ENCODE measurements at regions of chr5 and their contacts with region 1.

Region 1: DNA sequence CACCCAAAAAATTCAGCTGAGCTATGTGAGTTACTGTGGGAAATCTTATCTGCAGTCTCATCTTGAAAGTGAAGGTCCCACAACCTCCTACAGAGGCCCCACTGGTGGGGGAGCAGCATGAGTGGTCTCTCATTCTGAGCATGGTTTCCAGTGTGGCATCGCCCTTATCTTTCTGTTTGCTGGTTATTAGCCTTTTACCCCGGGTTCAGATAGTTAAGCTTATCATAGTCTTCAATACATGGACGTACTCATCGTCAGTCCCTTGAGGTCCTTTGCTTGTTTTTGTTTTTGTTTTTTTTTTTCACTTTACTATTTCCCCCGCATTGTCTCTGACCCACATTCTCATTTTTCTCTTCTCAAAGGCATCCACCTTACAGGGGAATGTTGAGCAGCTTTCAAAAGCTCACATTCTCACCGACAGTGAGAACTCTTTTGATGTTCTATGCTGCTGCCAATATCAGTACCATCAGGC is 7.7 kb upstream of the HAVCR2 start:
- DNase-seq: peak; percentile 63
- ATAC-seq: peak; percentile 88
- H3K4me3 ChIP-seq: peak overlapping the region; percentile 18; the same call in 1 of the 2 replicates
- H3K27ac ChIP-seq: peak overlapping the region; percentile 90
- H3K4me1 ChIP-seq: peaks cover 22% of the 10 kb centered on the region
- H3K27me3 ChIP-seq: no peaks in the 10 kb centered on the region
- CTCF ChIP-seq: no peak
- EP300 ChIP-seq: no peak
- POLR2A ChIP-seq: no peak
- RAD21 ChIP-seq: 0 out of 2 replicates have a peak, but pooled peaks have one; percentile 16

Region 2: DNA sequence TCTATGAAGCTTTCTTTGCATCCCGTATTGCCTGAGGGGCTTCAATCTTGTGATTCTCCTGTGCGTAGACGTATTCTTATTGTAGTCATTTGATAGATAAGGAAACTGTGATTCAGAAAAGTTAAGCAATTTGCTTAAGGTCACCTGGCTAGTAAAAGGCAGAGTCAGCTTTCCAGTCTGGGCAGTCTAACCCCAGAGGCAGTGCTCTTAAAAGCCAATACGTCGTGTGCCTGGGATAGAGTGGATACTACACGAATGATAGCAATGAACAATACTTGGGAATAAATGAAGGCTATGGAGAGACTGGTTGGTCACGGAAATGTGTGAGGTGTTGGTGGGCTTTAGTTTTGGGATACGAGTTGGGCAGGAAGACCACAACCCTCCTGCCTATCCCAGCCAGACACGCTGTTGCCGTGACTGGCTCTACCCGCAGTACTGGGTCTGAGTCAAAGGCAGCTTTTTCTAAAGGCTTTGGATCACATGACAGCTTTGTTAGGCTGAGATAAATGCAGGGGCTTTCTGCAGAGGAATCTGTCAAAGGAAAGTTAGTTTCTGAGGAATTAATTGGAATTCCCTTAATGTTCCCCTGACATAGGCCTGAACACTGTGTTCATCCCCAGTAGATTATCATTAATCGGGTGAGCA is 1800.3 kb before region 1 on chr5:
- CTCF ChIA-PET with region 1: no interaction called
- POLR2A ChIA-PET with region 1: no interaction called
- RAD21 ChIA-PET with region 1: no interaction called
- SMC1A ChIA-PET with region 1: no interaction called
- in situ Hi-C with region 1: no loop called
- intact Hi-C with region 1: no loop called
- DNase-seq: no peak
- ATAC-seq: no peak
- H3K4me3 ChIP-seq: no peak overlapping the region
- H3K27ac ChIP-seq: no peak overlapping the region
- H3K4me1 ChIP-seq: no peaks in the 10 kb centered on the region
- H3K27me3 ChIP-seq: no peaks in the 10 kb centered on the region
- CTCF ChIP-seq: no peak
- EP300 ChIP-seq: no peak
- POLR2A ChIP-seq: no peak
- RAD21 ChIP-seq: no peak

Region 3: DNA sequence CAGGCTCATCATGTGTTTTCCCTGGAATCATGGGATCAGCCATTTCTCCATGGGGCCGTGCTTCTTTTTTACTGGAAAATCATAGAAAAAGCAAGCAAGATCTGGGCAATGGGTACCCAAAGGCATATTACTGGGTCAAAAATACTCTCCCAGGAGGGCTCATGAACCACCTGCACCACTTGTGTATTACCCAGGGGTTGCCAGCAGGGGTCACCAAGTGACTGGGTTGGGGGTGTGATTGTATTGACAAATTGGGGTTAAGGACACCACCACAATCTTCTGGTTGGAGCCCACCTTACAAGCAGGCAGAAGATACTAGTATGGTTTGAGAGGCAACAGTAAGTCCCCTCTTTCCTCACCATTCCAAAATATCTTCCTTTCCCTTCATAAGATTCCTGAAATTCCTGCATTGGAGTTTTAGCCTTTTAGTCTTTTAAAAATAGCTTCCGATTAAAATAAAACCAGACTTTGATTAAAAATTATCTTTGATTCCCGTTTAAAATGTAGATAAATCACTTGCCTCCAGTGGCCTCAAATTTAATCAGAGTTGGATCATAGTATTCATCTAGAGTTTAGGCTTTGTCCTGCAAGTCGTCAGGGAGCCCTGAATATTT is 1499.6 kb before region 1 on chr5:
- CTCF ChIA-PET with region 1: no interaction called
- POLR2A ChIA-PET with region 1: no interaction called
- RAD21 ChIA-PET with region 1: no interaction called
- SMC1A ChIA-PET with region 1: no interaction called
- in situ Hi-C with region 1: loop called (anchors 10 kb)
- intact Hi-C with region 1: no loop called
- DNase-seq: no peak
- ATAC-seq: peak; percentile 84
- H3K4me3 ChIP-seq: no peak overlapping the region
- H3K27ac ChIP-seq: no peak overlapping the region
- H3K4me1 ChIP-seq: no peaks in the 10 kb centered on the region
- H3K27me3 ChIP-seq: no peaks in the 10 kb centered on the region
- CTCF ChIP-seq: peak; percentile 65 to 80 (median 73)
- EP300 ChIP-seq: no peak
- POLR2A ChIP-seq: no peak
- RAD21 ChIP-seq: peak; percentile 87

Region 4: GRCh38 chr5:155943516-155944407 is 1172.8 kb before region 1 on chr5:
- CTCF ChIA-PET with region 1: no interaction called
- POLR2A ChIA-PET with region 1: no interaction called
- RAD21 ChIA-PET with region 1: no interaction called
- SMC1A ChIA-PET with region 1: no interaction called
- in situ Hi-C with region 1: loop called (anchors 10 kb)
- intact Hi-C with region 1: no loop called
- DNase-seq: no peak
- ATAC-seq: peak; percentile 93
- H3K4me3 ChIP-seq: no peak overlapping the region
- H3K27ac ChIP-seq: no peak overlapping the region
- H3K4me1 ChIP-seq: no peaks in the 10 kb centered on the region
- H3K27me3 ChIP-seq: no peaks in the 10 kb centered on the region; a peak in 2 of 4 replicates
- CTCF ChIP-seq: peak; percentile 69 to 79 (median 76)
- EP300 ChIP-seq: no peak
- POLR2A ChIP-seq: no peak
- RAD21 ChIP-seq: peak; percentile 83

Region 5: GRCh38 chr5:156667616-156668015 is 448.9 kb before region 1 on chr5:
- CTCF ChIA-PET with region 1: no interaction called
- POLR2A ChIA-PET with region 1: no interaction called
- RAD21 ChIA-PET with region 1: no interaction called
- SMC1A ChIA-PET with region 1: no interaction called
- in situ Hi-C with region 1: loop called (anchors 10 kb)
- intact Hi-C with region 1: no loop called
- DNase-seq: no peak
- ATAC-seq: no peak
- H3K4me3 ChIP-seq: no peak overlapping the region
- H3K27ac ChIP-seq: no peak overlapping the region
- H3K4me1 ChIP-seq: no peaks in the 10 kb centered on the region
- H3K27me3 ChIP-seq: peaks cover 0 to 1% of the 10 kb centered on the region in 2 experiments; a peak in 2 of 4 replicates
- CTCF ChIP-seq: no peak
- EP300 ChIP-seq: no peak
- POLR2A ChIP-seq: no peak
- RAD21 ChIP-seq: no peak

Region 6: GRCh38 chr5:156991714-156992113 is 124.8 kb before region 1 on chr5:
- CTCF ChIA-PET with region 1: no interaction called
- POLR2A ChIA-PET with region 1: no interaction called
- RAD21 ChIA-PET with region 1: no interaction called
- SMC1A ChIA-PET with region 1: no interaction called
- in situ Hi-C with region 1: no loop called
- intact Hi-C with region 1: no loop called
- DNase-seq: no peak
- ATAC-seq: no peak
- H3K4me3 ChIP-seq: no peak overlapping the region
- H3K27ac ChIP-seq: no peak overlapping the region
- H3K4me1 ChIP-seq: no peaks in the 10 kb centered on the region
- H3K27me3 ChIP-seq: no peaks in the 10 kb centered on the region
- CTCF ChIP-seq: no peak
- EP300 ChIP-seq: no peak
- POLR2A ChIP-seq: no peak
- RAD21 ChIP-seq: no peak

Region 7: DNA sequence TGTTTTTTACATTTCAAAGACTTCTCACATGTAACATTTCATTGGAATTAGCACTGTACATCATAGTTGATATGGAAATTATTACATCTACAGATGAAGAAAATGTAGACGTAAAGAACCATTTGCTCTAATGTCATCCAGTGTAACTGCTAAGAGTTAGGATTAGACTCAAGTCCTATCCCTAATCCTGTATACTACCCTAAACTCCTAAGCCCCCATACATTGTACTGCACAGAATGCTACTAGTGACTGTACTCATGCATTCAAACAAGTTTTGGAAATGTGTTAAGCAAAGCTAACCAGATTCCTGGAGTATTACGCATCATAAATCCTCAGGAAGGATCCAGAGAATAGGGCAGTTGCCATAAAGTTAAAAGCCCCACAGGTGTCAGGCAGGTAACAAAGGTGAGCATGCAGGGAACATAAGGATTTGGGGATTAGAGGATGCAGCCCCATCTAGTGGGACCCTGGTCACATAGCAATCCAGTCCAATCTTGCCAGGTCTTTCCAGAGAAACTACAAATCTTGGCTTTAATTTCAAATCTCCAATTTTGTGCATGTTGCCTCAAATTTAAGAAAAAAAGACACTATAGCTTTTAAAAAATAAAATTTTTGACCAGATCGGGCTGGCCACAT is 89.6 kb before region 1 on chr5:
- CTCF ChIA-PET with region 1: interaction called, 3 read pairs
- POLR2A ChIA-PET with region 1: interaction called, 3 read pairs
- RAD21 ChIA-PET with region 1: interaction called, 4 read pairs
- SMC1A ChIA-PET with region 1: interaction called, 8 read pairs
- in situ Hi-C with region 1: no loop called
- intact Hi-C with region 1: loop called (anchors 5 kb)
- DNase-seq: no peak
- ATAC-seq: peak; percentile 48
- H3K4me3 ChIP-seq: no peak overlapping the region
- H3K27ac ChIP-seq: no peak overlapping the region
- H3K4me1 ChIP-seq: peaks cover 6% of the 10 kb centered on the region
- H3K27me3 ChIP-seq: no peaks in the 10 kb centered on the region
- CTCF ChIP-seq: peak; percentile 67 to 75 (median 69)
- EP300 ChIP-seq: no peak
- POLR2A ChIP-seq: no peak
- RAD21 ChIP-seq: peak; percentile 70

Region 8: DNA sequence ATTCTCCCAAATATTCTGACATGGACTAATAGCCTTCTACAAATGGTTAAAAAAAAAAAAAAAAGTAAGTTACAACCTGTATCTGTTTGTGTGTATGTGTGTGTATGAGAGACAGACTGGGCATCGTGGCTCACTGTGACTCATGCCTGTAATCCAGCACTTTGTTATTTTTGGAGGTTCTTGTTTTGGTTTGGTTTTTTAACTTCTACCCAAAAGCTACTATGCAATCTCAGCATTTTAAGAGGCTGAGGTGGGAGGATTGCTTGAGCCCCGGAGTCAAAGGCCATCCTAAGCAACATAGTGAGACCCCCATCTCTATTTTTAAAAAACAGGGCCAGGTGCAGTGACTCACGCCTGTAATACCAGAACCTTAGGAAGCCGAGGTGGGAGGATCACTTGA is 40.0 kb before region 1 on chr5:
- CTCF ChIA-PET with region 1: no interaction called
- POLR2A ChIA-PET with region 1: interaction called, 4 read pairs
- RAD21 ChIA-PET with region 1: interaction called, 9 read pairs
- SMC1A ChIA-PET with region 1: interaction called, 21 read pairs
- in situ Hi-C with region 1: no loop called
- intact Hi-C with region 1: loop called (anchors 2 kb)
- DNase-seq: no peak
- ATAC-seq: peak; percentile 69
- H3K4me3 ChIP-seq: no peak overlapping the region
- H3K27ac ChIP-seq: no peak overlapping the region
- H3K4me1 ChIP-seq: peaks cover 17% of the 10 kb centered on the region
- H3K27me3 ChIP-seq: no peaks in the 10 kb centered on the region
- CTCF ChIP-seq: no peak
- EP300 ChIP-seq: no peak
- POLR2A ChIP-seq: no peak
- RAD21 ChIP-seq: no peak

Region 9: GRCh38 chr5:157142317-157143126 is 26.0 kb after region 1 on chr5 and contains the start of gene MED7:
- CTCF ChIA-PET with region 1: interaction called, 7 read pairs
- POLR2A ChIA-PET with region 1: interaction called, 11 read pairs
- RAD21 ChIA-PET with region 1: interaction called, 8 read pairs
- SMC1A ChIA-PET with region 1: interaction called, 13 read pairs
- in situ Hi-C with region 1: no loop called
- intact Hi-C with region 1: no loop called
- DNase-seq: peak; percentile 99
- ATAC-seq: peak; percentile 100
- H3K4me3 ChIP-seq: peak within 1 kb of the TSS; percentile 88
- H3K27ac ChIP-seq: peak within 1 kb of the TSS; percentile 99
- H3K4me1 ChIP-seq: peaks cover 7% of the 10 kb centered on the region
- H3K27me3 ChIP-seq: no peaks in the 10 kb centered on the region
- CTCF ChIP-seq: no peak
- EP300 ChIP-seq: no peak
- POLR2A ChIP-seq: peak; percentile 96
- RAD21 ChIP-seq: no peak
- polyA plus RNA-seq, gene MED7: 42.6 to 47.7 TPM

Measured in GM12878 (cell line).